Naive thymus-derived CD4-positive, alpha-beta T cell (primary cell): ENCODE measurements at regions of chr1 and their contacts with region 1.

Region 1: DNA sequence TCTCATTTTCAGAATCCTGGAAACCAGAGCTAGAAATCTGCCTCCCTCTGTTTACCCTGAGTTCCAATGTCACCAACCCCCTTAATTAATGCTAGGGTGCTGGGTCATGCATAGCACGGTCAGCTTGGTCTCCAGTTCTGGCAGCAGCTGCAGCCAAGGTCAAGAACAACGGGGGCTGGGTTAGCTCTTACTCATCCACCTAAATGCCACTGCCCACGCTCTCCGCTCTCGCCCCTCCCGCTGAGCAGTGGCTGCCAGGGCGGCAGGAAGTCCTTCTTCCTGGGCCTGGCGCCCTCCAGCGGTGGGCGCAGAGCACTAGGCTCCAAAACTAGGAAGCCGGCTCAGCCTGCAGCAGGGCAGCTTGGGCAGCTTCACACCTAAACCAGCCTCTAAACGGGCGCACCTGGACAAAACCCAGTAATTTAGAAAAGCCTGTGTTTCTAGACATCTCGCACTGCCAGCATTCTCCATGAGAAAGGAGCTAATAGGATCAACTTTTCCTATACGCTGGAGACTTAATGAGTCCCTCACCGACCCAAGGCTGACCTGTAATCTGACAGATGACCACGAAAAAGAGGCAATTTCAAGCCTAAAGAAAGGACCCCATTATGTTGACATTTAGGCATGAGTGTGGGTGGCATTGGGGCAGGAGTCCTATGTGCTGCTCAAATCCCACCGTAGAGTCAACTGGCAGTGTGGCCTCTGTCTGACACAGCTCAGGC is 78.3 kb upstream of the LRRN2 start:
- DNase-seq: peak; percentile 44 to 80 (median 66)
- ATAC-seq: peak; percentile 96
- H3K4me3 ChIP-seq: peak overlapping the region; percentile 27
- H3K4me3 Mint-ChIP-seq: peak overlapping the region; percentile 46 to 74 (median 60)
- H3K27ac ChIP-seq: no peak overlapping the region
- H3K27ac Mint-ChIP-seq: no peak overlapping the region
- H3K4me1 ChIP-seq: peaks cover 4 to 9% of the 10 kb centered on the region in 2 donors
- H3K4me1 Mint-ChIP-seq: peaks cover 6 to 16% (median 7%) of the 10 kb centered on the region in 7 donors
- H3K27me3 ChIP-seq: no peaks in the 10 kb centered on the region
- H3K27me3 Mint-ChIP-seq: peaks cover 3 to 41% (median 11%) of the 10 kb centered on the region in 5 donors

Region 2: GRCh38 chr1:204431310-204432165 is 332.3 kb before region 1 on chr1:
- CTCF ChIA-PET with region 1: no interaction called
- POLR2A ChIA-PET with region 1: no interaction called
- intact Hi-C with region 1: loop called in 1 of 2 experiments (anchors 5 kb)
- DNase-seq: peak; percentile 52 to 75 (median 69)
- ATAC-seq: peak; percentile 88
- H3K4me3 ChIP-seq: no peak overlapping the region
- H3K4me3 Mint-ChIP-seq: no peak overlapping the region
- H3K27ac ChIP-seq: no peak overlapping the region
- H3K27ac Mint-ChIP-seq: peak overlapping the region in 5 of 9 donors; percentile 6 to 69 (median 42)
- H3K4me1 ChIP-seq: no peaks in the 10 kb centered on the region
- H3K4me1 Mint-ChIP-seq: peaks cover 0 to 13% (median 4%) of the 10 kb centered on the region in 7 donors
- H3K27me3 ChIP-seq: no peaks in the 10 kb centered on the region
- H3K27me3 Mint-ChIP-seq: no peaks in the 10 kb centered on the region

Region 3: GRCh38 chr1:204751894-204752687 is 11.8 kb before region 1 on chr1:
- CTCF ChIA-PET with region 1: interaction called, 12 read pairs
- POLR2A ChIA-PET with region 1: no interaction called
- intact Hi-C with region 1: no loop called
- DNase-seq: no peak
- ATAC-seq: no peak
- H3K4me3 ChIP-seq: no peak overlapping the region
- H3K4me3 Mint-ChIP-seq: no peak overlapping the region
- H3K27ac ChIP-seq: no peak overlapping the region
- H3K27ac Mint-ChIP-seq: no peak overlapping the region
- H3K4me1 ChIP-seq: no peaks in the 10 kb centered on the region
- H3K4me1 Mint-ChIP-seq: peaks cover 0 to 2% (median 0%) of the 10 kb centered on the region in 7 donors
- H3K27me3 ChIP-seq: no peaks in the 10 kb centered on the region
- H3K27me3 Mint-ChIP-seq: peaks cover 0 to 21% (median 11%) of the 10 kb centered on the region in 5 donors